ENCODE measurements at regions of chr4 and their contacts with region 1.

Region 1: GRCh38 chr4:31089815-31090214 is 369.6 kb downstream of the PCDH7 start:
- DNase-seq: no peak
- ATAC-seq: peak; percentile 75

Region 2: DNA sequence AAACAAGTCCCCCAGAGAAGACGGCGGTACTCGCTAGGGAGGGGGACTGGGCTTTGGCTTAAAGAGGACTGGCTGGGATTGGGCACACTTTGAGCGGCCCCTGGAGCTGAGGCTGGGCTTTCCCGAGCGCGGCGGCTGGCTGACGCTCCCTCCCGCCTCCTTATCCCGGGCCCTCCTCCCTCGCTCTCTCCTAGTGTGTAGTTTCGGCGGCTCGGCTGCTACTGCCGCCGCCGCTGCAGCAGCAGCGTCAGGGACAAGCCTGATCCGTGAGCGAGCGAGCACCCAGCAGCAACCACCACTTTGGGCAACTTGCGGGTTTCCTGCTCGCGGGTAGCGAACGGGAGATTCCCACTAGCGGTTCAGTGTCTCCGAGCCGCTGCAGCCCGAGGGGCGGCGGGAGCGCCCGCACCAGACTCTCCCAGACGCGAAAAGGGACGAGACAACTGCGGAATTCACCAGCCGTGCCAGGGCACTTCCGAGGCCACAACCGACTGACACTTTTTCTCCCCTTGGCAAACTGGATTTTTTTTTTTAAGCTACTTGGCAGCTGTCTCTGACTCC is 370.3 kb before region 1 on chr4:
- intact Hi-C with region 1: loop called (anchors 10 kb)
- DNase-seq: peak; percentile 72
- ATAC-seq: peak; percentile 69

Region 3: DNA sequence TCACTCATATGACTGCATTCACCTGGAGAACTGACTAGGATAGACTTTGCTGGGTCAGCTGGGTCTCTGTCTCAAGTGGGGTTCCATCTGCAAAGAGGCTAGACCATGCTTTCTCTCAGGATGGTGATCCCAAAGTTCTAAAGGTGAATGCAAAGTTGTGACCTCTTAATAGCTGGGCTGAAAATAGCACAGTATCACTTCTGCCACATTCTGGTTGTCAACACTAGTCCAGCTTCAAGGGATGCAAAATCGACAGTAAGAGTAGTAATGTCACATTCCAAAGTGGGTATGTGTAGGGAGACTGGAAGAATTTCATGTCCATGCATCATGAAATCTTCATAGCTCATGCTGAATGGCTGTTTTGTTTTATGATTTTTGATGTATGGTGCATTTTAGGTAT is 44.9 kb after region 1 on chr4:
- intact Hi-C with region 1: loop called (anchors 2 kb)
- DNase-seq: no peak
- ATAC-seq: peak; percentile 92

Region 4: GRCh38 chr4:31234494-31234893 is 144.7 kb after region 1 on chr4:
- intact Hi-C with region 1: loop called (anchors 10 kb)
- DNase-seq: no peak
- ATAC-seq: no peak

Measured in Right ventricle myocardium inferior (tissue), 1 donor.